Activated CD4-positive, alpha-beta memory T cell treated with anti-CD3 and anti-CD28 coated beads, Interleukin-2, amount 10 ng/mL, durations not matched to agents 7 days and 5 days (primary cell): ENCODE measurements at regions of chr17 and their contacts with region 1.

Region 1: DNA sequence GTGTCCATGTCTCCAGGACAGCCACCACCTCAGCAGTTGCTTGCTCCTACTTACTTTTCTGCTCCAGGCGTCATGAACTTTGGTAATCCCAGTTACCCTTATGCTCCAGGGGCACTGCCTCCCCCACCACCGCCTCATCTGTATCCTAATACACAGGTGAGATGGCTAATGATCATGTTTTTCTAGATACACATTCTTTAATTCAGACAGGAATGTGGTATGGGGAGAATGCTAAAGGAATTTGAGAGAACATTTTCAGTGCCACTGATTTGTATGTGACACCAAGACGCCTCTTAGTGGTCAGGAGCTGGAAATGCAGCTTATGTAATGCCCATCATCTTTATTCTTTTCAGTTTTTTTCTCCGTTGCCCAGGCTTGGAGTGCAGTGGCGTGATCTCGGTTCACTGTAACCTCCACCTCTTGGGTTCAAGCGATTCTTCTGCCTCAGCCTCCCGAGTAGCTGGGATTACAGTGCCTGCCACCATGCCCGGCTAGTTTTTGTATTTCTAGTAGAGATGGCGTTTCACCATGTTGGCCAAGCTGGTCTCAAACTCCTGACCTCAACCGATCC is 8.9 kb upstream of the RAPGEFL1 start:
- DNase-seq: peak; percentile 32
- H3K4me3 Mint-ChIP-seq: no peak overlapping the region
- H3K27ac Mint-ChIP-seq: peak overlapping the region; percentile 58
- H3K4me1 Mint-ChIP-seq: peaks cover 5% of the 10 kb centered on the region
- H3K27me3 Mint-ChIP-seq: no peaks in the 10 kb centered on the region

Region 2: DNA sequence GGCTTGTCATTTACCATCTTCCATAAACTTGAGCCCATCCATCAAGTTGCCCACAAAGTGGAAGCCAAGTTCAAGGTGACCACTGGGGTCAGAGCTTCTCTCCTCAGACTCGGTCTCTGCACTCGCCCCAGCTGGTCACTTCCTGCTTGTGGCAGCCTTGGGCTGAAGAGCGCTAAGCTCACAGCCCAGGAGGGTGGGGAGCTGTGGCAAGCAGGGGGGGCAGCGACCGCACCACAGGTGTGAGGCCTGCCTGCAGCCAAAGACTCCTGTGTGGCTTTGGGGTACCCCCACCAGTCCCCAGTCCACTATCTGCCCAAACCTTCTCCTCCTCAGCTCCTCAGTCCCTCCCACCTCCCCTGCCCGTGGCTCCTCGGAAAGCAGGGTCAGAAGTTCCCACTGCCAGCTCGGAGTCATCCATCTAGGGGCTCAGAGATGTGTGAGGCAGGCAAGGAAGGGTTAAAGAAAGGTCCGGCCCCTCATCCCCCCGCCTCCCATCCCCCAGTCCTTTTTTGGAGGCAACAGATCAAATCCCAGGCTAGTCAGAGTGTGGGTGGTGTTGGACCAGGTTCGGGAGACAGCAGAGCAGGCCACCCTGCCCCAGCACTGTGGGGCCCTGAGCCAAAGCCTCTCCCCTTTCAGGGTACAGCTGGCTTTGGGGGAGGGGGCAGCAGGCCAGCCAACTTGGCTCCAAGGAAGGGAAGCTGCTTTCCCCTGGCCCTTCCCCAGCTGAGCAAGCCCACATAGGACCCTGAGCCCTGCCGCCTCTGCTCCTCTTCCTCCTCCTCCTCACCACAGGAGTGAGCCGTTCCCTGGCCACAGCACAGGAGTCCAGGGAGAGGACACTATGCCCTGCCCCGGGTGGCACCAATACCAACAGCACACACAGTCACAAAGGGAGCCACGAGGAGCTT is 149.9 kb before region 1 on chr17:
- CTCF ChIA-PET with region 1: interaction called, 13 read pairs
- POLR2A ChIA-PET with region 1: no interaction called
- DNase-seq: no peak
- H3K4me3 Mint-ChIP-seq: no peak overlapping the region
- H3K27ac Mint-ChIP-seq: no peak overlapping the region
- H3K4me1 Mint-ChIP-seq: peaks cover 4% of the 10 kb centered on the region
- H3K27me3 Mint-ChIP-seq: no peaks in the 10 kb centered on the region

Region 3: DNA sequence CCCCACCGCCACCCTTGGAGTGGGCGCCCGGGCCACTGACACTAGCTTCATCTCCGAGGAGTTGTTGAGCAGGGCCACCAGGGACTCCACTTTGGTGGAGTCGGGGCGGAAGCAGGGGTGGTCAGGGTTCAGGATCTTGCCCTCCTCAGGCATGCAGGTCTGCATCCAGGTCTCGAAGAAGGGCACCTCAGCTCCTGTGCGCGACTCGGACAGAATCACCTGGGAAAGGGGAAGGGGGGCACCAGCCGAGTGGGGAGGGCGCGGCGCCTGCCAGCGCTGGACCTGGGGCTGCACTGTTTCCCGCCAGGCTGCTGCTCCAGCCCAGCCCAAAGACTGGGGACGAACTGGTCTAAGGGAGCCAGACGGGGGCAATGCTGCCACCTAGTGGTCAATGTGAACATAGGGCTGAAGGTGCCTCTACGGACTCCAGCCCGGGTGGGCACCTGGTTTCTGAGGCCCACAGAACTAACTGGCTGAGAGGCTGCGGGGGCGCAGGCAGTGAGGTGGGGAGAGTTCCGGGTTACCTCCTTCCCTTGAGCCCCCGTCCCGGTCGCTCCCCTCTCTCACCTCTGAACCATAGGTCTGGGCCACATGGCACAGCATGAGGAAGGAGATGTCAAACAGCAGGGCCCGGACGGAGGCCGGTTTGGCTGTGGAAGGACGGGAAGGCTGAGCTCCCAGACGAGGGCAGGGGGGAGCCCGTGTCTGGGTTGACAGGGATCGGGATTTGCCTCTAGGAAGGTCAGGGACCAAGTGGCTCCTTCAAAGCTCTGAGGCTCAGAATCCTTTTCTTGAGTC is 141.3 kb before region 1 on chr17:
- CTCF ChIA-PET with region 1: interaction called, 14 read pairs
- POLR2A ChIA-PET with region 1: no interaction called
- DNase-seq: peak; percentile 81
- H3K4me3 Mint-ChIP-seq: no peak overlapping the region
- H3K27ac Mint-ChIP-seq: no peak overlapping the region
- H3K4me1 Mint-ChIP-seq: peaks cover 25% of the 10 kb centered on the region
- H3K27me3 Mint-ChIP-seq: no peaks in the 10 kb centered on the region

Region 4: GRCh38 chr17:40121181-40122135 is 46.9 kb before region 1 on chr17 and contains the start of gene MSL1:
- CTCF ChIA-PET with region 1: interaction called, 8 read pairs
- POLR2A ChIA-PET with region 1: interaction called, 11 read pairs
- DNase-seq: peak; percentile 86
- H3K4me3 Mint-ChIP-seq: peak within 1 kb of the TSS; percentile 78
- H3K27ac Mint-ChIP-seq: peak within 1 kb of the TSS; percentile 74
- H3K4me1 Mint-ChIP-seq: peaks cover 39% of the 10 kb centered on the region
- H3K27me3 Mint-ChIP-seq: no peaks in the 10 kb centered on the region
- total RNA-seq, gene MSL1: 102 to 103 TPM

Region 5: DNA sequence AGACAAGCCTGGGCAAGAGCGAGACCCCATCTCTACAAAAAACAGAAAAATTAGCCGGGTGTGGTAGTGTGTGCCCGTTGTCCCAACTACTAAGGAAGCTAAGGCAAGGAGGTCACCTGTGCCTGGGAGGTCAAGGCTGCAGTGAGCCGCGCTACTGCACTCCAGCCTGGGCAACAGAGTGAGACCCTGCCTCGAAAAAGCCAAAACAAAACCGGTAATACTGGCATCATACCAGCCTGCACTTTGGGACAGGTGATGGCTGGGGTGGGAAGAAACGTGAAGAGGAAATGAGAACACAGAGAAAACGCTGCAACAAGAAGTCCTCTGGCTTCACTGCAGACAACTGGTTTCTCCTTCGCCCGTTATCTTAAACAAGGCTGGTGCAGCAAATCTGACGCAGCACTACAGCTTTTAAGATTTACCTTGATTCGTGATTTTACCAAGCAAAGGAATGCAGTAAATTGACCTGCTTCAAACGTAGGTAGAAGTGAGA is 28.7 kb before region 1 on chr17:
- CTCF ChIA-PET with region 1: interaction called, 16 read pairs
- POLR2A ChIA-PET with region 1: interaction called, 9 read pairs
- DNase-seq: no peak
- H3K4me3 Mint-ChIP-seq: peak overlapping the region; percentile 82
- H3K27ac Mint-ChIP-seq: peak overlapping the region; percentile 94
- H3K4me1 Mint-ChIP-seq: peaks cover 29% of the 10 kb centered on the region
- H3K27me3 Mint-ChIP-seq: no peaks in the 10 kb centered on the region

Region 6: DNA sequence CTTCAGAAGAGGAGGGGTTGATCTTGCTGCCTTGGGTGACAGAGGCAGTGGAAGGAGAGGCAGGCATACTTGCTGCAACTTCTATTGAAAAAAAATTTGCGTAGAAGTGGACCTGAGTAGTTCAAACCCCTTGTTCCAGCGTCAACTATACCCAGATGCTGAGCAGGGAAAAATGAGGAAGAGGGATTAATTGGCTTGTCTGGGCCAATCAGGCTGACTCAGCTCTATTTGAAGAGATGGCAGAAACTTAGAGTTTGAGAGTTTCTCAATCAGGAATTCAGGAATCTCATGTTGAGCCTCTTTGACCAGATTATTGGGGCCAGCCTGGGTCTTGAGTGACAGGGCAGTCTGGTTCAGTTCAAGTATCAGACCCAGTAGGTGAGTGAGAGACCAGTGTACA is 10.4 kb before region 1 on chr17:
- CTCF ChIA-PET with region 1: interaction called, 15 read pairs
- POLR2A ChIA-PET with region 1: interaction called, 3 read pairs
- DNase-seq: no peak
- H3K4me3 Mint-ChIP-seq: no peak overlapping the region
- H3K27ac Mint-ChIP-seq: no peak overlapping the region
- H3K4me1 Mint-ChIP-seq: peaks cover 15% of the 10 kb centered on the region
- H3K27me3 Mint-ChIP-seq: no peaks in the 10 kb centered on the region

Region 7: GRCh38 chr17:40191237-40192208 is 23.2 kb after region 1 on chr17:
- CTCF ChIA-PET with region 1: interaction called, 10 read pairs
- POLR2A ChIA-PET with region 1: interaction called, 7 read pairs
- DNase-seq: peak; percentile 75
- H3K4me3 Mint-ChIP-seq: peak overlapping the region; percentile 94
- H3K27ac Mint-ChIP-seq: no peak overlapping the region
- H3K4me1 Mint-ChIP-seq: peaks cover 15% of the 10 kb centered on the region
- H3K27me3 Mint-ChIP-seq: peaks cover 2% of the 10 kb centered on the region

Region 8: DNA sequence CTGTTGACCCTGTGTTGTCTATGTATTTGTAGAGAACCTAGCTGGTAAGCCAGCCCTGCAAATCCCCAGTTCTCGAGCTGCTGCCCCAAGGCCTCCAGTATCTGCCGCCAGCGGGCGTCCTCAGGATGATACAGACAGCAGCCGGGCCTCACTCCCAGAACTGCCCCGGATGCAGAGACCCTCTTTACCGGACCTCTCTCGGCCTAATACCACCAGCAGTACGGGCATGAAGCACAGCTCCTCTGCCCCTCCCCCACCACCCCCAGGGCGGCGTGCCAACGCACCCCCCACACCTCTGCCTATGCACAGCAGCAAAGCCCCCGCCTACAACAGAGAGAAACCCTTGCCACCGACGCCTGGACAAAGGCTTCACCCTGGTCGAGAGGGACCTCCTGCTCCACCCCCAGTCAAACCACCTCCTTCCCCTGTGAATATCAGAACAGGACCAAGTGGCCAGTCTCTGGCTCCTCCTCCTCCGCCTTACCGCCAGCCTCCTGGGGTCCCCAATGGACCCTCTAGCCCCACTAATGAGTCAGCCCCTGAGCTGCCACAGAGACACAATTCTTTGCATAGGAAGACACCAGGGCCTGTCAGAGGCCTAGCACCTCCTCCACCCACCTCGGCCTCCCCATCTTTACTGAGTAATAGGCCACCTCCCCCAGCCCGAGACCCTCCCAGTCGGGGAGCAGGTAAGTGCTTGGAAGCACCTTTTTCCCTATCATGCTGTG is 96.3 kb after region 1 on chr17:
- CTCF ChIA-PET with region 1: no interaction called
- POLR2A ChIA-PET with region 1: no interaction called
- DNase-seq: no peak
- H3K4me3 Mint-ChIP-seq: no peak overlapping the region
- H3K27ac Mint-ChIP-seq: no peak overlapping the region
- H3K4me1 Mint-ChIP-seq: no peaks in the 10 kb centered on the region
- H3K27me3 Mint-ChIP-seq: no peaks in the 10 kb centered on the region